ENCODE measurements at regions of chr12 and their contacts with region 1.

Region 1: DNA sequence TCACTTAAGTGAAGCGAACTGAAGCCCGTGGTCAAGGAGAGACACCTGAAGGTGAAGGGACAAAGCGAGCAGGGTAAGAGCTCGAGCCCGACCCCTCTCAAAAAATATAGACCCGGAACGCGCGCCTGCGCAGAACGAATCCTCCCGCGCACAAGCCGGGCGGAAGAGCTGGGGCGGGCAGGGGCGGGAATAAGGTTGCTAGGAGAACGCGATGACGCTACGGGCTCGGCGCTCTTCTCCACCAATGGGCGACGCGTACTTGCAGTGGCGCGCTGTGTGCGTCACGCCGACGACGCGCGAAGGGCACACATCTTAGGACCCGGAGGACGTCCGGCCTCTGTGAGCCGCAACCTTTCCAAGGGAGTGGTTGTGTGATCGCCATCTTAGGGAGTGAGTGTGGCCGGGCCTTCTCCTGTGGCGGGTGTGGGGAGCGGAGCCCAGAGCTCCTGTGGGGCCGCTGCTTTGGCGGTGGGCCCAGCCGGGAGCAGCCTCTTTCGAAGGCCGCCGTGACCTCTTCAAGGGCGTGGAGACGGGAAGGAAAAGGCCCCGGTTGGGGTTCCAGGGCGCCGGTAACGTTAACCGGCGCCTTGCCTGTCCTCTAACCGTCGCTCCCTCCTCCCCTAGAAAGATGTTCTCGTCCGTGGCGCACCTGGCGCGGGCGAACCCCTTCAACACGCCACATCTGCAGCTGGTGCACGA is at the start of gene SLC25A3:
- DNase-seq: peak; percentile 95
- H3K4me3 ChIP-seq: peak within 1 kb of the TSS; percentile 72 to 99
- H3K27ac ChIP-seq: peak within 1 kb of the TSS; percentile 81 to 85
- H3K4me1 ChIP-seq: peaks cover 0 to 13% of the 10 kb centered on the region in 2 experiments; a peak in 2 of 4 replicates
- H3K27me3 ChIP-seq: no peaks in the 10 kb centered on the region
- CTCF ChIP-seq: no peak
- EP300 ChIP-seq: no peak
- RAD21 ChIP-seq: peak; percentile 16; the same call in 1 of the 2 replicates
- polyA plus RNA-seq, gene SLC25A3: 470 and 528 TPM in 2 replicates

Region 2: DNA sequence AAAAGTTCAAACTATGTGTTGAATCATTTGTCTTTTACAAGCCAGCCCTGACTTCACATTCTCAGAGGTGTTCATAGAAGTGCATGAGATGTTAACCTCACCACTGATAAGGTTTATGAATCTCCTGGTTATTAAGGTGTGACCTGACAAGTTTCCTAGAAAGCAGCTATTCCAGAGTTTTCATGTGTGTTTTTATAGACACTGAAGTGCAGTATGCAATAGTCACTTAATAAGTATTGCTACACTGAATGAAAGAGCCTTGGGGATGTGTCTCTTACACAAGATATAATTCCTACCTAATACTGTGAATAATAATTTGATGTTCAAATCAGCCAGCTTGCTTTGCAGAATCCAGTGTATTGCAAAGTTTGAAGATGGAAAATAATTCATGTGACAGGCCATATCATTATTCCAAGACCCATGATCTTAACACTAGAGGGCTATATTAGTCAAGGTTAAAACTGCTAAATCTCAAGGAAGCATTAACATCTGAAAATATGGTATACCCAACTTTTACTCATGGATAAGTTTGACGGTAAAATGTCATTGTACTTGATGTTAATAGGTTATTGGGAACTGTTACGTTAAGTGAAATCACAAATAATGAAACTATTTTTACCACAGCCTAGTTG is 13.0 kb after region 1 on chr12:
- CTCF ChIA-PET with region 1: interaction called, 25 read pairs
- POLR2A ChIA-PET with region 1: interaction called, 3 read pairs
- DNase-seq: no peak
- H3K4me3 ChIP-seq: no peak overlapping the region
- H3K27ac ChIP-seq: no peak overlapping the region
- H3K4me1 ChIP-seq: no peaks in the 10 kb centered on the region
- H3K27me3 ChIP-seq: no peaks in the 10 kb centered on the region
- CTCF ChIP-seq: peak; percentile 32; the same call in 1 of the 2 replicates
- EP300 ChIP-seq: no peak
- RAD21 ChIP-seq: no peak

Measured in SK-N-SH (cell line).